Prostate gland (tissue), 2 donors: ENCODE measurements at regions of chr10 and their contacts with region 1.

Region 1: DNA sequence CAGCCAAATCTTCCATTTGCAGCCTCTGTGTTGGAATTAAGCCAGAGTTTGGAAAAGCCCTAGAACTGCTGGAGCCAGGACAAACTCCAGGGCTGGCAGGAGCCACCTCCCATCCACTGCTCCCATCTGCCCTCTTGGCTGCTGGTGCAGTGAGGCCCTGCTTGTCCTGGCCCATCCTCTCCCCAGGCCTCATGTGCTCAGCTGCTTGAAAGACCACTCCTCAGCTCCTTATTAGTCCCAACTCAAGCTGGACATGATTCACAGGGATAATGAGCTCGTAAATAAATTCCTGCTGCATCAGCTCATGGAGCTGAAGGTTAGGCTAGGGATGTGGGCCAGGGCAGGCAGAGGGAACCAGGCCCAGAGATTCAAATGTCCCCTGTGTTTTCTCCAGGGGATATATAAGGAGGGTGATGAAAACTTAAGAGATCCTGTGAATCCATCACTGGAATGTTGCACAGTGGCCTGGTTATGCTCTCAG is 282.8 kb downstream of the RPS24 start:
- DNase-seq: peak; percentile 4
- H3K4me3 ChIP-seq: no peak overlapping the region
- H3K27ac ChIP-seq: peak overlapping the region; percentile 15 to 48
- H3K4me1 ChIP-seq: no peaks in the 10 kb centered on the region
- H3K27me3 ChIP-seq: no peaks in the 10 kb centered on the region
- CTCF ChIP-seq: no peak
- POLR2A ChIP-seq: no peak

Region 2: GRCh38 chr10:78510566-78511323 is 194.3 kb after region 1 on chr10:
- intact Hi-C with region 1: loop called (anchors 10 kb)
- DNase-seq: no peak
- H3K4me3 ChIP-seq: no peak overlapping the region
- H3K27ac ChIP-seq: peak overlapping the region; percentile 13 to 14
- H3K4me1 ChIP-seq: no peaks in the 10 kb centered on the region
- H3K27me3 ChIP-seq: no peaks in the 10 kb centered on the region
- CTCF ChIP-seq: no peak
- POLR2A ChIP-seq: no peak